ENCODE measurements at regions of chr1 and their contacts with region 1.

Region 1: GRCh38 chr1:30718636-30719405 is 4.6 kb downstream of the MATN1 start:
- DNase-seq: peak; percentile 97 to 98
- ATAC-seq: peak; percentile 66 to 85 (median 72)
- H3K4me3 ChIP-seq: peak overlapping the region; percentile 96
- H3K4me3 Mint-ChIP-seq: peak overlapping the region; percentile 89
- H3K27ac ChIP-seq: peak overlapping the region; percentile 100
- H3K27ac Mint-ChIP-seq: peak overlapping the region; percentile 98 to 100
- H3K4me1 ChIP-seq: peaks cover 38% of the 10 kb centered on the region
- H3K4me1 Mint-ChIP-seq: peaks cover 0 to 18% of the 10 kb centered on the region in 2 donors
- H3K27me3 ChIP-seq: no peaks in the 10 kb centered on the region
- H3K27me3 Mint-ChIP-seq: no peaks in the 10 kb centered on the region
- CTCF ChIP-seq: peak; percentile 99

Region 2: DNA sequence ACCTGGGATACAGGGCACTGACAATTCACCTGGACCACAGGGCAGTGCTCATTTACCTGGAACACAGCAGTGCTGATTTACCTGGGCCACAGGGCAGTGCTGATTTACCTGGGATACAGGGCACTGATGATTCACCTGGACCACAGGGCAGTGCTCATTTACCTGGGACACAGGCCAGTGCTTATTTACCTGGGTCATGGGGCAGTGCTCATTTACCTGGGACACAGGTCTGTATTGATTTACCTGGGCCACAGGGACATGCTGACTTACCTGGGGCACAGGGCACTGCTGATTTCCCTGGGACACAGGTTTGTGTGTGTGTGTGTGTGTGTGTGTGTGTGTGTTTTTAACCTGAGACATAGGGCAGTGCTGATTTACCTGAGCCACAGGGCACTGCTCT is 257.2 kb before region 1 on chr1:
- intact Hi-C with region 1: no loop called
- DNase-seq: no peak
- ATAC-seq: no peak
- H3K4me3 ChIP-seq: no peak overlapping the region
- H3K4me3 Mint-ChIP-seq: no peak overlapping the region
- H3K27ac ChIP-seq: no peak overlapping the region
- H3K27ac Mint-ChIP-seq: no peak overlapping the region
- H3K4me1 ChIP-seq: no peaks in the 10 kb centered on the region
- H3K4me1 Mint-ChIP-seq: no peaks in the 10 kb centered on the region
- H3K27me3 ChIP-seq: no peaks in the 10 kb centered on the region
- H3K27me3 Mint-ChIP-seq: peaks cover 6 to 10% of the 10 kb centered on the region in 2 donors
- CTCF ChIP-seq: no peak

Region 3: GRCh38 chr1:30572192-30572591 is 146.6 kb before region 1 on chr1:
- intact Hi-C with region 1: no loop called
- DNase-seq: no peak
- ATAC-seq: no peak
- H3K4me3 ChIP-seq: no peak overlapping the region
- H3K4me3 Mint-ChIP-seq: no peak overlapping the region
- H3K27ac ChIP-seq: no peak overlapping the region
- H3K27ac Mint-ChIP-seq: no peak overlapping the region
- H3K4me1 ChIP-seq: no peaks in the 10 kb centered on the region
- H3K4me1 Mint-ChIP-seq: no peaks in the 10 kb centered on the region
- H3K27me3 ChIP-seq: no peaks in the 10 kb centered on the region
- H3K27me3 Mint-ChIP-seq: peaks cover 5 to 14% of the 10 kb centered on the region in 2 donors
- CTCF ChIP-seq: no peak

Region 4: GRCh38 chr1:30756545-30757195 is 37.8 kb after region 1 on chr1:
- intact Hi-C with region 1: loop called (anchors 1 kb)
- DNase-seq: peak; percentile 72 to 87
- ATAC-seq: peak; percentile 66 to 87 (median 73)
- H3K4me3 ChIP-seq: peak overlapping the region; percentile 87
- H3K4me3 Mint-ChIP-seq: peak overlapping the region; percentile 99
- H3K27ac ChIP-seq: peak overlapping the region; percentile 95
- H3K27ac Mint-ChIP-seq: peak overlapping the region; percentile 99 to 100
- H3K4me1 ChIP-seq: peaks cover 88% of the 10 kb centered on the region
- H3K4me1 Mint-ChIP-seq: peaks cover 82 to 88% of the 10 kb centered on the region in 2 donors
- H3K27me3 ChIP-seq: no peaks in the 10 kb centered on the region
- H3K27me3 Mint-ChIP-seq: no peaks in the 10 kb centered on the region
- CTCF ChIP-seq: no peak

Region 5: GRCh38 chr1:30779294-30780071 is 60.7 kb after region 1 on chr1:
- intact Hi-C with region 1: loop called (anchors 1 kb)
- DNase-seq: peak; percentile 90 to 92
- ATAC-seq: peak; percentile 72 to 84 (median 81)
- H3K4me3 ChIP-seq: no peak overlapping the region
- H3K4me3 Mint-ChIP-seq: no peak overlapping the region
- H3K27ac ChIP-seq: no peak overlapping the region
- H3K27ac Mint-ChIP-seq: no peak overlapping the region
- H3K4me1 ChIP-seq: peaks cover 19% of the 10 kb centered on the region
- H3K4me1 Mint-ChIP-seq: peaks cover 15 to 18% of the 10 kb centered on the region in 2 donors
- H3K27me3 ChIP-seq: no peaks in the 10 kb centered on the region
- H3K27me3 Mint-ChIP-seq: no peaks in the 10 kb centered on the region
- CTCF ChIP-seq: peak; percentile 97

Region 6: DNA sequence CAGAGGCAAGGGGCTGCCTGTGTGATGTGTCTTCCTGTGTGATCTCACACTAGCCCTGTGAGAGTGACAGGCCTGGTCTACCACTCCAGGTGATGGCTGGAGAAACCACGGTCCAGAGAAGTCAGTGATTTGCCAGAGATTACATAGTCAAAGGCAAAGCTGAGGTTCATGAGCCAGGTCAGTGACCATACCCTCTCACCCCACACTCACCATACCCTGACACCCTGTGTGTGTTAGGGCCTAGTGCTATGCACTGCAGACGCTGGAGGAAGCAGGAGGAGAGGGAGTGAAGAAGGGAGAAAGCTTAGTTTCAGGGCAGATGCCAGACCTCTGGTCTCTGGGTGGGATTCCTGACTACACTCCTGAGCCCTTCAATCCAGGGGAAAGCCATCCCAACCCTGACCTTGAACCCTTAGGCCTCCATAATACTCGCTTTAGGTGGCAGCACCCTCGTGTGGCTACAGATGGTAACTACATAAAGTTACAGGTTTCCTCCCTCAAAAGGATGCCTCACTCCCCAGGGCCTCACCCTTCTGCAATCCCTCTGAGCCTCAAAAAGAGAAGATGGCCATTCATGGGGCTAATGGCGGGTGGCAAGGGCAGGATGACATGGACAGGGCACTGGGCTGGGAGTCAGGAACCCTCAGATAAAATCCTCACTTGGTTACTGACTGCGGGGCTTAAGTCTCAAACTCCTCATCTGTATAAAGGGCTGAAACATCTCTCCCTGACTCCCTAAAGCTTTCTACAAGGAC is 210.5 kb after region 1 on chr1:
- intact Hi-C with region 1: loop called (anchors 1 kb)
- DNase-seq: peak; percentile 54 to 69
- ATAC-seq: peak; percentile 93 to 94 (median 94)
- H3K4me3 ChIP-seq: no peak overlapping the region
- H3K4me3 Mint-ChIP-seq: no peak overlapping the region
- H3K27ac ChIP-seq: peak overlapping the region; percentile 50
- H3K27ac Mint-ChIP-seq: peak overlapping the region; percentile 75 to 87
- H3K4me1 ChIP-seq: peaks cover 13% of the 10 kb centered on the region
- H3K4me1 Mint-ChIP-seq: peaks cover 17 to 20% of the 10 kb centered on the region in 2 donors
- H3K27me3 ChIP-seq: no peaks in the 10 kb centered on the region
- H3K27me3 Mint-ChIP-seq: no peaks in the 10 kb centered on the region
- CTCF ChIP-seq: peak; percentile 84